Activated naive CD4-positive, alpha-beta T cell treated with anti-CD3 and anti-CD28 coated beads for 36 hours (primary cell): ENCODE measurements at regions of chr13 and their contacts with region 1.

Region 1: DNA sequence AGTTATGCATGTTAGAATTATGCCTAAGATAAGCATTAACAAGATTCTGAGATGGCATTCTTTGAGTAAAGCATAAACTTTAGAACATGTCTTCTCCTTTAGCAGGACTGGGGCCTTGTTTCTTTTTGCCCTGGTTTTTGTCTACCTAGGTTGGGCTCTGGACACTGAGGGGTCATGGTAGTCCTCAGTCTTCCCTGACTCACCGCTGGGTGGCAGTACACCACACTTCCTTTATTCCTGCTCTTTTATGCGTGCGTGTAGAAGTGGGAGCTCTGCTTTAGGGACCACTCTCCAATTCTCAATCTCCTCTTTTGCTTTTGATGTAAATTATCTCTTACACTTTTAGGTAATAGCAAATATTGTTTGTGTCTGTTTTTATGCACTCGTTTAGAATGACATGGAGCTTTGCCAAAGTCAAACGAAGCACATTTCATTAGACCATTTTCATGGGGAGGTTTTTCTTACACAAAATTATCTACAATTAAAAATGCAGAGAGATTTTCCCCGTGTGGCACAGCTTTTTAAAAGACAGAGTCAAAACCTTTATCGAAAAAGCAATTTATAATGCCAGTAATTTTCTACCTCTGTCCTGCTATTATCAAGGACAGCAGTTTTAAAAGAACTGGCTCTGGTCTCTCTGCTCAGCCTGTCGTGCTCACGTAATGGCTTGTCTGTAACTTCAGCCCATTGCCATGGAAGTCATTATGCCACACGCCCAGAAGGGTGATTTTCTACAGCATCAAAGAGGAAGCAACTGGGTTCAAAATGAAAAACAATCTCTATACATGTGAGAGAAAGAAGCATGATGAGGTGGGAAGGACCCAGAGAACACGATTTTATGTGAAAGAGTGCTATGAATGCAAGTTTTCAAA is 413.9 kb downstream of the COG6 start:
- DNase-seq: peak; percentile 87
- H3K4me3 Mint-ChIP-seq: peak overlapping the region; percentile 12
- H3K27ac Mint-ChIP-seq: peak overlapping the region; percentile 27
- H3K4me1 Mint-ChIP-seq: peaks cover 29% of the 10 kb centered on the region
- H3K27me3 Mint-ChIP-seq: no peaks in the 10 kb centered on the region

Region 2: DNA sequence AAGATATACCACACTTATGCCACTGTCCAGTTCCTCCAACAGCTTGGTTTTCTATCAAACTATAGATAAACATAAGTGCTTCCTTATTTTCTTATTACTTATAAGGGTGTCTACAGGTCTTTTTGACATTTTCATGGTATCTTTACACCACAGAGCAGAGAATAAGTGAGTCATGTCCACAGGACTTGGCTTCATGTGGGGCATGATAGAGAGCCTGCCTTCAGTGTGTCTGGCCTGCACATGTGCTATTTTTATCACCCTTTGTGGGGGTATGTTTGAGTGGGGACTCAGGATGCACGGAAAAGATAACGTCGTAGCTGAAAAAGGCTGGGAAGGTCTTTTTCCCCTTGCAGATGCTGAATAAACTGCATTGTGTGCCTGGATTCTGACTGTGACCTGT is 1070.7 kb before region 1 on chr13:
- CTCF ChIA-PET with region 1: no interaction called
- intact Hi-C with region 1: no loop called
- DNase-seq: no peak
- H3K4me3 Mint-ChIP-seq: no peak overlapping the region
- H3K27ac Mint-ChIP-seq: no peak overlapping the region
- H3K4me1 Mint-ChIP-seq: peaks cover 5% of the 10 kb centered on the region
- H3K27me3 Mint-ChIP-seq: no peaks in the 10 kb centered on the region

Region 3: DNA sequence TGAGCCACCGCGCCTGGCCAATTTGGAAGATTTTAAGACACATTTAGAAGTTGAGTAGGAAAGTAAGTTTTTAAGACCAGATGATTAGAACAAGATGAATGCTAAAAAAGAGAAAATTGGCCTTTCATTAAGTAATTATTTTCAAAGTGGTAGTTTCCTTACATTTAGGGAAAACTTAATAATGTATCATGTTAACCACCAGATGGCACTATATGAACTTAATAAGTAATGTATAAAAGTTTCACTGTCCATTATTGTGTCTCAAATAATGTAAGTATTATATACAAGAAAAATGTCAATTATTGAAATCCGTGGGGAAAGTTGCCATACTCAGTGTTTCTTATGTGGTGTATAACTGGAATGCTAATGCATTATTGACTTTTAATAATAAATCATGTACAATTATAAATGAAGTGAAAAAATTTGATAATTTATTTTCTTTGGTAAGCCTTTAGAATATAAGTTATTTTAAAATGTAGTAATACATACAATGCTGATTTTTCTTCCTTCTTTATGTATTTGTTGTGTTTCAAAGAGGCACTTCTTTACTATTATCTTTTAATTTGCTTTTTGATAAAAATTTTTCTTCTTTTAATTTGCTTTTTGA is 384.8 kb before region 1 on chr13:
- CTCF ChIA-PET with region 1: no interaction called
- intact Hi-C with region 1: loop called (anchors 5 kb)
- DNase-seq: no peak
- H3K4me3 Mint-ChIP-seq: no peak overlapping the region
- H3K27ac Mint-ChIP-seq: no peak overlapping the region
- H3K4me1 Mint-ChIP-seq: peaks cover 16% of the 10 kb centered on the region
- H3K27me3 Mint-ChIP-seq: no peaks in the 10 kb centered on the region

Region 4: GRCh38 chr13:39859898-39860297 is 209.5 kb before region 1 on chr13:
- CTCF ChIA-PET with region 1: no interaction called
- intact Hi-C with region 1: no loop called
- DNase-seq: no peak
- H3K4me3 Mint-ChIP-seq: no peak overlapping the region
- H3K27ac Mint-ChIP-seq: no peak overlapping the region
- H3K4me1 Mint-ChIP-seq: peaks cover 3% of the 10 kb centered on the region
- H3K27me3 Mint-ChIP-seq: peaks cover 3% of the 10 kb centered on the region

Region 5: DNA sequence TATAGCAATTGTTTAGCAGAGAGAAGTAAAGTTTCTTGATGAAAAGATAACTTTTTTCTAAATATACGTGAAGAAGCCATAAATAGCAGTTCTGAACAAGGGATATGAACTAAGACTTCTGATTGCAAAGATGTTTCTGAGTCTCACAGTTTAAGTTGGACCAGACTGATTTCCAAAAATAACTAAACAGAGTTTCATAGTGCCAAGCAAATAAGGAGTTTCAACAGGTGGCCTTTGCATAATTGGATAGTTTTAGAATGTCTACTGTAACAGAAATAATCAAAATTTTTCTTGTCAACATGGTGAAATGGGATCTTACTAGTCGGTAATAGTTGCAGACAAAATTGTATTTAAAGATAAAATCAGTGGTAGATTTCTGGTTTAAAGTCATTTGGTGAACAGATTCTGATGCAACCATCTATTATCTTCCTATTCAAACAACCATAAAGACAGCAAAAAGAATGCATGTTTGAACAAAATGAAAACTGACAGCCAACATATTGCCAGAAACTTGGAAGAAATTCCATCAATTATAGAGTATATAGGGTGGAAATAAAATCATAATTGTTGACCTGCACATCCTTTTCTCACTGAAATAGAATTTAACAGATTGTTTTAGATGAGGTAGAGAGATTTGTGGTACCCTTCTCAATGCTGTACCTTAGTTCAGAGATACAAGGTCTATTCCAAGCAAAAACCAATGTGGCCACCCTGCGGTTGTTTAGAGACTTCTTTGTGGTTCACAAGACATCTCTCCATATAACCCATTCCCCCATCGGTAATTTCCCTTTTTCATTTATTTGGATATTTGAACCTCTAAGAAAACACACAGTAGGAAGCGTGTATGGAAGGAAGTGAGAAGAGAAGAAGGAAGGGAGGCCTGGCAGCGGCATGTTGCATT is 138.6 kb before region 1 on chr13:
- CTCF ChIA-PET with region 1: no interaction called
- intact Hi-C with region 1: no loop called
- DNase-seq: no peak
- H3K4me3 Mint-ChIP-seq: no peak overlapping the region
- H3K27ac Mint-ChIP-seq: no peak overlapping the region
- H3K4me1 Mint-ChIP-seq: peaks cover 19% of the 10 kb centered on the region
- H3K27me3 Mint-ChIP-seq: no peaks in the 10 kb centered on the region

Region 6: DNA sequence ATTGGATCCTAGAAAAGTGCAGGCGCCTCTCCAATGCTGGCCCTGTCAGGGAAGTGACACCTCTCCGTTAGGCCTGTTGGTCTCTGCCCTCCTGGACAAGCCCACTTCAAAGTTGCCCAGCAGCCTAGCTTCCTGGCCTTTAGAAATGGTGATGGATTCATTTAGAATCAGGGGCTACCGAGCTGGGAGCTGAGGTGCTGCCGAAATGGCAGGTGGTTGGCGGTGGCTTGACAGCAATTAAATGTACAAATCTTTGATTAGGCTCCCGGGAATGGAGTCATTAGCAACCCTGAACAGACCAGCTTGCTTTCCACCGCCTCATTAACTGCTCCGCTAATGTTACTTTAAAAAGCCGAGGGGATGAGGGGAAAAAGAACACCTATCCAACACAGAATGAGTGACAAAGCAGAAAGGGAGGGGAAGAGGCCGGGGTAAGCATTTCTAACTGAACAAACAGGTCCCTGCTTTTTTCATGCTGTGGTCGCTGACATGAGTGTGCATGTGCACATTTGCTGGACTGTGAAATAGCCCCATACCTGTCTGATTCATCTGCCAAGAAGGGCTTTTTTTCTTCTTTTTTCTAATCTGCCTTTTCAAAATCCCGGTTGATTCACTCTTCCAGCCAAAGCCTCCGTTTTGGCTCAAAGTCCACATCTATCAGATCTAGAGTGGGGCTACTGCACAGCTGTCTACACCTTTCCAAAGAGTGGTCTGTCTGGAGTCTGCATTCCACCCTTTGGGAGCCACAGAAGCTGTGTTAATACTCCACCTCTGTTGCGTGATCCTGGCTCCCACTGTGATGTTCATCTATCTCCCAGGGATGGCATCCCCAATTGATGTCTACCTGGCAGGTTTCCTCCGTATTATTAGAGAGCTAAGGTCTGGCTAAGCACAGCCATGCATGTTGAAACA is 17.9 kb after region 1 on chr13:
- CTCF ChIA-PET with region 1: interaction called, 14 read pairs
- intact Hi-C with region 1: no loop called
- DNase-seq: no peak
- H3K4me3 Mint-ChIP-seq: no peak overlapping the region
- H3K27ac Mint-ChIP-seq: no peak overlapping the region
- H3K4me1 Mint-ChIP-seq: no peaks in the 10 kb centered on the region
- H3K27me3 Mint-ChIP-seq: no peaks in the 10 kb centered on the region

Region 7: DNA sequence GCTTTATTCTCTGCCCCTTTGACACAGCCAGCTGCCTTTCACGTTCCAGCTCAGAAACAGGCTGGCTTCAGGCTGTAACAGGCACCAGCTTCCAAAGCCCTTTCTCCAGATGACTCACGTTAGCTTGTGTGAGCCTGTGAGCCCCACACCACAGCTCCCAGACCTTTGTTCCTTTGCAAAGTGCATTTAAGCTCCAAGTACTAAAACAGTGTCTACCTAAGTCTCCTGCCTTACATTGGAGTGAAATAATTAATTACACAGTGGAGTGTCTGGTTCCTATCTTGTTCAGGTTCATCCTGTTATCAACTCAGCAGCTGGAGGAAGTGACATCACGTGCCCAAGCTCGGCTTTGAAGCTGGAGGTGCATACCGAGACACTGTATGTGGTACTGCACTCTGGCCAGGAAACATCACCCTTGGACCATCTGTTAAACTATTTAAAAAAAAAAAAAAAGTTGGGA is 121.3 kb after region 1 on chr13:
- CTCF ChIA-PET with region 1: interaction called, 11 read pairs
- intact Hi-C with region 1: loop called (anchors 1 kb)
- DNase-seq: peak; percentile 91
- H3K4me3 Mint-ChIP-seq: peak overlapping the region; percentile 36
- H3K27ac Mint-ChIP-seq: peak overlapping the region; percentile 81
- H3K4me1 Mint-ChIP-seq: peaks cover 69% of the 10 kb centered on the region
- H3K27me3 Mint-ChIP-seq: no peaks in the 10 kb centered on the region

Region 8: GRCh38 chr13:40251343-40252032 is 182.1 kb after region 1 on chr13:
- CTCF ChIA-PET with region 1: no interaction called
- intact Hi-C with region 1: loop called (anchors 1 kb)
- DNase-seq: peak; percentile 28
- H3K4me3 Mint-ChIP-seq: no peak overlapping the region
- H3K27ac Mint-ChIP-seq: peak overlapping the region; percentile 88
- H3K4me1 Mint-ChIP-seq: peaks cover 52% of the 10 kb centered on the region
- H3K27me3 Mint-ChIP-seq: no peaks in the 10 kb centered on the region

Region 9: GRCh38 chr13:40682449-40683240 is 613.2 kb after region 1 on chr13:
- CTCF ChIA-PET with region 1: interaction called, 18 read pairs
- intact Hi-C with region 1: loop called (anchors 1 kb)
- DNase-seq: no peak
- H3K4me3 Mint-ChIP-seq: no peak overlapping the region
- H3K27ac Mint-ChIP-seq: no peak overlapping the region
- H3K4me1 Mint-ChIP-seq: peaks cover 12% of the 10 kb centered on the region
- H3K27me3 Mint-ChIP-seq: no peaks in the 10 kb centered on the region